ENCODE measurements at regions of chr1 and their contacts with region 1.

Region 1: DNA sequence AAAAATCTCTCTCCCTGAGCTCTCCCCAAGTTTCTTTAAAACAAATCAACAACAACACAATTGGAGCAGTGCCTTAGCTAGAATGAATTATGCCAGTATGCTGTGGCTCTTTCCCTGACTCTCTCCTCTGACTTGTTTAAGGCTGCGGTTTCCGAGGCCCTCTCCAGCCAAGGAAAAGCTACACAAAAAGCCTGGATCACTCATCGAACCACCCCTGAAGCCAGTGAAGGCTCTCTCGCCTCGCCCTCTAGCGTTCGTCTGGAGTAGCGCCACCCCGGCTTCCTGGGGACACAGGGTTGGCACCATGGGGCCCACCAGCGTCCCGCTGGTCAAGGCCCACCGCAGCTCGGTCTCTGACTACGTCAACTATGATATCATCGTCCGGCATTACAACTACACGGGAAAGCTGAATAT is 1.9 kb downstream of the S1PR1 start:
- DNase-seq: peak; percentile 61 to 81
- H3K4me3 ChIP-seq: no peak overlapping the region
- H3K27ac ChIP-seq: no peak overlapping the region
- H3K4me1 ChIP-seq: peaks cover 20% of the 10 kb centered on the region
- H3K27me3 ChIP-seq: peaks cover 4% of the 10 kb centered on the region; the same call in 1 of the 2 replicates
- CTCF ChIP-seq: peak; percentile 98

Region 2: GRCh38 chr1:100921109-100921706 is 317.5 kb before region 1 on chr1:
- CTCF ChIA-PET with region 1: no interaction called
- POLR2A ChIA-PET with region 1: interaction called, 33 read pairs
- intact Hi-C with region 1: loop called (anchors 1 kb)
- DNase-seq: no peak
- H3K4me3 ChIP-seq: no peak overlapping the region
- H3K27ac ChIP-seq: no peak overlapping the region
- H3K4me1 ChIP-seq: no peaks in the 10 kb centered on the region
- H3K27me3 ChIP-seq: no peaks in the 10 kb centered on the region
- CTCF ChIP-seq: peak; percentile 95

Region 3: GRCh38 chr1:101025657-101026504 is 212.8 kb before region 1 on chr1 and contains the start of gene DPH5:
- CTCF ChIA-PET with region 1: interaction called, 8 read pairs
- POLR2A ChIA-PET with region 1: no interaction called
- intact Hi-C with region 1: loop called (anchors 1 kb)
- DNase-seq: peak; percentile 84 to 87
- H3K4me3 ChIP-seq: peak within 1 kb of the TSS; percentile 75
- H3K27ac ChIP-seq: peak within 1 kb of the TSS; percentile 77
- H3K4me1 ChIP-seq: peaks cover 18% of the 10 kb centered on the region
- H3K27me3 ChIP-seq: no peaks in the 10 kb centered on the region
- CTCF ChIP-seq: no peak
- total RNA-seq, gene DPH5: 38.8 and 39.4 TPM in 2 replicates

Region 4: DNA sequence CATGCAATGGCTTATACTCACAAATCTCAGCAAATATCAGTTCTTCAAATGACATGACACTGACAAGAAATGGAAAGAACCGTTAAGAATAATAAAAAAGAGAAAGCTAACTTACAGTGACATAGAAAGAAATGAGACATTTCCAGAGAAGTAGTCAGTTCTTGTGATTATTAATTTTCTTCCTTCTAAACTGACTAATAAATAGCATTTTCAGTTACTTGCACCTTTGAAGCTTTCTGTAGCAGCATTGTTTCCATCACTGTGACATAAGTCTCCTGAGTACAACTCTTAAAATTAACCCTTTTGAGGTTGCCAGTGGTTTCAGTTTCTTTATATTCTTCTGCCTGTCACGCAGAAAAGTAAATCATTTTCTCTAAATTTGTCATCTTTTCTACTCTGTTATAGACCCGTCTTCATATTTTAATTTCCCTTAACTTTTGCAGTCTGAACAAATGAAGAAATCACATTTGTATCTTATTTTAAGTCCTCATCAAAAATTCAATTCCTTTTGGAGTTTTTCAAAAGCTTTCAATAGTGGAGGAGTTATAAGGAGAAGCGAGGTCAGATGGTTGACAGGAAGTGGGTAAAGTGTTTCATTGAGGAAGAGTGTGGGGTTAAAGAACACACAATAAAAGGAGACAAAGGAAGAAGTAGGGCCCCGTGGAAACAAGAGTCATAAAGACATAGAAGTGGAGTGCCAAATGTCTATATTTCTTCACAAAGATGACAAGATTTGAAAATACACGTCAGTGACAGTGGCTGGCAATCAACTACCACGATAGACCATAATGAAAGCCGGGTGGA is 59.8 kb before region 1 on chr1:
- CTCF ChIA-PET with region 1: no interaction called
- POLR2A ChIA-PET with region 1: no interaction called
- intact Hi-C with region 1: loop called (anchors 10 kb)
- DNase-seq: no peak
- H3K4me3 ChIP-seq: no peak overlapping the region
- H3K27ac ChIP-seq: no peak overlapping the region
- H3K4me1 ChIP-seq: no peaks in the 10 kb centered on the region
- H3K27me3 ChIP-seq: no peaks in the 10 kb centered on the region
- CTCF ChIP-seq: no peak

Region 5: GRCh38 chr1:101207891-101208290 is 30.8 kb before region 1 on chr1:
- CTCF ChIA-PET with region 1: no interaction called
- POLR2A ChIA-PET with region 1: no interaction called
- intact Hi-C with region 1: no loop called
- DNase-seq: no peak
- H3K4me3 ChIP-seq: no peak overlapping the region
- H3K27ac ChIP-seq: no peak overlapping the region
- H3K4me1 ChIP-seq: no peaks in the 10 kb centered on the region
- H3K27me3 ChIP-seq: no peaks in the 10 kb centered on the region
- CTCF ChIP-seq: no peak

Region 6: GRCh38 chr1:101288491-101288944 is 49.8 kb after region 1 on chr1:
- CTCF ChIA-PET with region 1: interaction called, 4 read pairs
- POLR2A ChIA-PET with region 1: no interaction called
- intact Hi-C with region 1: loop called (anchors 2 kb)
- DNase-seq: peak; percentile 65 to 95
- H3K4me3 ChIP-seq: no peak overlapping the region; the same call in 1 of the 2 replicates
- H3K27ac ChIP-seq: no peak overlapping the region
- H3K4me1 ChIP-seq: peaks cover 25% of the 10 kb centered on the region
- H3K27me3 ChIP-seq: no peaks in the 10 kb centered on the region
- CTCF ChIP-seq: peak; percentile 99

Region 7: DNA sequence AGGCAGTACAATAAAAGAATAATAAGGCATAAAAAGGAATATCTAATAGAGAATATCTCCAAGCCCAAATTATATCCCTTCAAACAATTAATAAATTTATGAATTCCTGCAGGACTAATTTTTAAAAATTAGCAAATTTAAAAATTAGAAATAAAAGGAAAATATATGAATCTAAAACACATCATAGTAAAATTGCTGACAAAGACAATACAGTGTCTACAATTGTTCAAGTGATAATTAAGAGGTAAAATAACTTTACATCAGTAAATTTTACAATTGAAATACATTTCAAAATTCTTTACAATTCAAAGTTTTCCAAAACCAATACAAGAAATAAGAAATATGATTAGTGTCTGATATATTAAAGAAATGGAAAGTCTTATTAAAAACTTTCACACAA is 780.8 kb after region 1 on chr1:
- CTCF ChIA-PET with region 1: no interaction called
- POLR2A ChIA-PET with region 1: no interaction called
- intact Hi-C with region 1: no loop called
- DNase-seq: no peak
- H3K4me3 ChIP-seq: no peak overlapping the region
- H3K27ac ChIP-seq: no peak overlapping the region
- H3K4me1 ChIP-seq: no peaks in the 10 kb centered on the region
- H3K27me3 ChIP-seq: no peaks in the 10 kb centered on the region
- CTCF ChIP-seq: no peak